ENCODE measurements at regions of chr17 and their contacts with region 1.

Region 1: DNA sequence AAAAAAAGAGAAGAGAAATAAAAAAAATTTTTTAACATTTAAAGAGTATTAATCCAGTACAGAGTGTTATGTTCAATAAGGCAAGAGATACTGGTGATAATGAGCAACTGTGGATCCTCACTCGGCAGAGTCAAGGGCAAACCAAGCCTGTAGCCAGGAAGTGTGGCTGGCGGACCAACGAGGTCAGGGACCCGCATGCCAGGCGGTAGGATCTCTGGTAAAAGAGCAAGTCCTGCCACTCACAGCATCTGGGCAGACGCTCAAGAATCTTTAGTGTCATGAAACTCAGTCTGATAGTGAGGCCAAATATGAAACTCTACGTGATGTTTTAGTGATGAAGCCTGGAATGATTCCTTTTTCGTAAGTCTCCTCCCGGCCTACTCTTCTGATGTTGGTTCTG is 8.3 kb upstream of the GEMIN4 start:
- H3K4me3 ChIP-seq: no peak overlapping the region
- H3K27ac ChIP-seq: no peak overlapping the region
- H3K4me1 ChIP-seq: no peaks in the 10 kb centered on the region
- CTCF ChIP-seq: no peak

Region 2: DNA sequence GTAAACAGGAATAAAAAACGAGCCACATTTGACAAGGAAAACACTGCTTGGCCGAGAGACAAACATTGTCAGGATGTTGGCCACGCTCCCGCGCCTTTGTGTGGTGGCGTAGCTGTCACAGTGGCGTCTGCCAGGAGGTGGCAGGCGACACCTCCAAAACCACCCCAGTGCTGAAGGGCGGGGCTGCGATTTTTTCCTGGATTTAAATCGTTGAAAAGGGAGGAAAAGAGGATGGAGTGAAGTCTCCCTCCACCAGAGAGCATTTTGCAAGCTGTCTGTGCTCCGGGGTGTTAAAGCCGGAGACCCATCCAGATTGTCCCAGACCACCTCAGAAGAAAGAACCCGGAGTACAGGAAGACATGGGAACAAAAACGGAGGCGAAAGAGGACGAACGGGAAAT is 34.5 kb after region 1 on chr17:
- CTCF ChIA-PET with region 1: interaction called, 11 read pairs
- POLR2A ChIA-PET with region 1: no interaction called
- H3K4me3 ChIP-seq: no peak overlapping the region
- H3K27ac ChIP-seq: no peak overlapping the region
- H3K4me1 ChIP-seq: no peaks in the 10 kb centered on the region
- CTCF ChIP-seq: peak; percentile 93

Region 3: GRCh38 chr17:869567-870525 is 109.5 kb after region 1 on chr17:
- CTCF ChIA-PET with region 1: no interaction called
- POLR2A ChIA-PET with region 1: no interaction called
- H3K4me3 ChIP-seq: no peak overlapping the region
- H3K27ac ChIP-seq: no peak overlapping the region
- H3K4me1 ChIP-seq: no peaks in the 10 kb centered on the region
- CTCF ChIP-seq: no peak

Region 4: GRCh38 chr17:1039511-1040215 is 279.3 kb after region 1 on chr17:
- CTCF ChIA-PET with region 1: no interaction called
- POLR2A ChIA-PET with region 1: no interaction called
- H3K4me3 ChIP-seq: no peak overlapping the region
- H3K27ac ChIP-seq: no peak overlapping the region
- H3K4me1 ChIP-seq: peaks cover 7% of the 10 kb centered on the region
- CTCF ChIP-seq: no peak

Measured in HEK293 (cell line).